ENCODE measurements at regions of chr2 and their contacts with region 1.

Region 1: DNA sequence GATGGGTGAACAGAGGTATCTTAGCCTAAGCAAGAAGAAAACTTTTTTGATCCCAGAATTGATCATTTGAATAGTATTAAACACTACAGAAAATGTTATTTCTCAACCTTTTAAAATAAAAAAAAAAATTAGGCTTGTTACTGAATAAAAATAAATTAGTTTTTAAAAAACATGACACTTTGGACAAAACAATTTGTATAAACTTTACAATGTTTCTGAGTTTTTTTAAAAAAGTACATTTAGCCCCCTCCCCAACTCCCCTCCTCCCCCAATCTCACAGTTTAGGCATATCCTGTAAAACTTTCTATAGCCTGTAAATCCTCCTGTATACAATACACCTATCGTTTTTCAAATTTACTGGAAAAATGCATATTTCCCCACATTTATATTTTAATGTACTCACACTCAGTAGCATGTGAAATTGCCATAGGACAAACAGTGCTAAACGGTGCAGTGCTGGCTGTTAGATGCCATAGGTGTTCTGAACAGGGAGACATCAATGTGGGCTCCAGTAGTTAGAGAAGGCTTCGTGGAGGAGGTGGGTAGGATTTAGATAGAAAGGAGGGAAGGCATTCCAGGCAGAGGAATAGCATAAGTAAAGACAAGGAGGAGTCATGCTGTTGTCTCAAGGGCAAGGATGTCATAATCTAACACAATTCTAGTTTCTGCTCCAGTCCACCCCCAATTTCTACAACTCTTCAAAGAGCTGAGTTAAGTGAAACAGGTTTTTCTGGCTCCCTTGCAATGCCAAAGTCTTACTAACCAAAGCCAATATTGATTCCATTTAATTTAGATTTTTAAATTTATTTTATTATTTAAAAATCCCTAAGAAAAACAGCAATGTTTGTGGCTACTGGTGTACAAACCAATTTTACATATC is 50.9 kb downstream of the SP3 start:
- DNase-seq: peak; percentile 20
- H3K4me3 Mint-ChIP-seq: peak overlapping the region; percentile 30
- H3K27ac Mint-ChIP-seq: peak overlapping the region; percentile 72
- H3K4me1 Mint-ChIP-seq: peaks cover 38% of the 10 kb centered on the region
- H3K27me3 Mint-ChIP-seq: no peaks in the 10 kb centered on the region
- CTCF ChIP-seq: no peak

Region 2: GRCh38 chr2:173843526-173843925 is 70.8 kb before region 1 on chr2:
- CTCF ChIA-PET with region 1: no interaction called
- intact Hi-C with region 1: no loop called
- DNase-seq: no peak
- H3K4me3 Mint-ChIP-seq: no peak overlapping the region
- H3K27ac Mint-ChIP-seq: no peak overlapping the region
- H3K4me1 Mint-ChIP-seq: no peaks in the 10 kb centered on the region
- H3K27me3 Mint-ChIP-seq: peaks cover 27% of the 10 kb centered on the region
- CTCF ChIP-seq: no peak

Region 3: DNA sequence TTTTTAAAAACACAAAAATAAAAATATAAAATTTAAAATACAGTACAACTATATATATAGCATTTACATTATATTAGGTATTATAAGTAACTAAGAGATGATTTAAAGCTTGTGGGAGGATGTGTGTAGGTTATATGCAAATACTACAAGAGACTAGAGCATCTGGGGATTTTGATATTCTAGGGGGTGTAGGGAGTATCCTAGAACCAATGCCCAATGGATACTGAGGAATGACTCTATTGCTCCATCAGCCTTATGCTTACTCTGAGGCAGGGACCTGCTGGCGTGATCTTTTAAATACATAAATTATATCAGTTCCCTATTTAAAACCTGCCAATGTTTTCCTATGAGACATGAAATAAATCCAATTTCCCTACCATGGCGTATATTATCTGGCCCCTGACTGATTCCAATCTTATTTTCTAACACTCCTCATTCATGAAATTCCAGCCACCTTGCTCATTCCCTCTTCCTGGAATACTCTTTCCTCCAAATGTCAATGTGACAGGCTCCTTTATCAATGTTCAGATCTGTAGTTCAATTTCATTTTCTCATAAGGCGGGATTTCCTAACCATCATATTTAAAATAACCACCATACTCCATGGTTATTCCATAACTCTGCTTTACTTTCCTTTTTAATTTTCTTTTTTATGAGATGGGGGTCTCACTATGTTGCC is 28.7 kb after region 1 on chr2:
- CTCF ChIA-PET with region 1: no interaction called
- intact Hi-C with region 1: loop called (anchors 2 kb)
- DNase-seq: no peak
- H3K4me3 Mint-ChIP-seq: no peak overlapping the region
- H3K27ac Mint-ChIP-seq: peak overlapping the region; percentile 6
- H3K4me1 Mint-ChIP-seq: peaks cover 67% of the 10 kb centered on the region
- H3K27me3 Mint-ChIP-seq: no peaks in the 10 kb centered on the region
- CTCF ChIP-seq: no peak

Measured in Calu3 (cell line).